ENCODE measurements at regions of chr22 and their contacts with region 1.

Region 1: DNA sequence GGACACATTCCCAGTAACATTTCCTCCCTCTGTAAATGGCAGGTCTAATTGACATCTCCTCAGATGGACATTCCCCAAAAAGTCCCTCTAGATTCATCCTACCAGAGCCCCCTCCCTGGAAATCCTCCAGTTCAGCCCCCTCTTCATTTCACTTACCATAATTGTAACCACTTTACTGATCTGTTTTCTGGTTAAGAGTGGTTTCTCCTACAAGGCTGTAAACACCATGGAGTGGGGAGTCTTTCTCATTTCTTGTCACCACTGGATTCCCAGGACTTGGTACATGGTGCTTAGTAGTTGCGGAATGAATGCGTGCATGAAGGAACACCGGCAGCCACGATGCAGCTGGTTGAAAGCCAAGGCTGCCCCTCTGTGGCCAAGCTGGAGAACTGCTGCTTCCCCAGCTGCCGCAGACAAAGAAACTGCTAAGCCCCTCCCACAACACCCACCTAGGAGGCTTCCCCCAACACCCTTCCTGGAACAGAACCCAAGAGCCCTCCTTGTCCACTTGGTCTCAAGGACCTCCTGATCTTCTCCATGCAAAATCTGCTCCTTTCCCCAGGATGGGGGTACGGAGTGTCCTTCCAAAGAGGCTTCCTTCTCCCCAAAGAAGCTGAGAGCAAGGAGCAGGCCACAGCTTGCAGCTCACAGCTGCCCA is 18.6 kb upstream of the SCARF2 start:
- DNase-seq: peak; percentile 82
- ATAC-seq: peak; percentile 95
- H3K4me3 ChIP-seq: no peak overlapping the region
- H3K27ac ChIP-seq: no peak overlapping the region
- H3K4me1 ChIP-seq: peaks cover 6% of the 10 kb centered on the region
- H3K27me3 ChIP-seq: no peaks in the 10 kb centered on the region
- CTCF ChIP-seq: peak; percentile 92

Region 2: GRCh38 chr22:20418211-20418788 is 37.9 kb before region 1 on chr22:
- intact Hi-C with region 1: loop called (anchors 5 kb)
- DNase-seq: peak; percentile 92
- ATAC-seq: peak; percentile 96
- H3K4me3 ChIP-seq: peak overlapping the region; percentile 48
- H3K27ac ChIP-seq: no peak overlapping the region
- H3K4me1 ChIP-seq: peaks cover 4% of the 10 kb centered on the region
- H3K27me3 ChIP-seq: no peaks in the 10 kb centered on the region
- CTCF ChIP-seq: peak; percentile 84

Region 3: GRCh38 chr22:20490183-20490940 is 34.2 kb after region 1 on chr22:
- intact Hi-C with region 1: no loop called
- DNase-seq: no peak
- ATAC-seq: no peak
- H3K4me3 ChIP-seq: no peak overlapping the region
- H3K27ac ChIP-seq: no peak overlapping the region
- H3K4me1 ChIP-seq: peaks cover 10% of the 10 kb centered on the region
- H3K27me3 ChIP-seq: no peaks in the 10 kb centered on the region
- CTCF ChIP-seq: no peak